Breast epithelium (tissue), 4 donors: ENCODE measurements at regions of chr3 and their contacts with region 1.

Region 1: DNA sequence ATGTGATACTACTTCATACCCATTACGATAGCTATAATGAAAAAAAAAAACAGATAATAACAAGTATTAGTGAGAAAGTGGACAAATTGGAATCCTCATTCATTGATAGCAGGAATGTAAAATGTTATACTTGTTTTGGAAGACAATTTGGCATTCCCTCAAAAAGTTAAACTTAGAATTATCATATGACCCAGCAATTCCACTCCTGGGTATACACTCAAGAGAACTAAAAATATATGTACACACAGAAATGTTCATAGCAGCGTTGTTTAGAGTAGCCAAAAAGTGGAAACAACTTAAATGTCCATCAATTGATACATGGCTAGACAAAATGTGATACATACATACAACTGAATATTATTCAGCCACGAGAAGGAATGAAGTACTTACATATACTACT is 69.9 kb downstream of the PRICKLE2 start:
- DNase-seq: no peak
- H3K4me3 ChIP-seq: no peak overlapping the region
- H3K27ac ChIP-seq: no peak overlapping the region
- H3K4me1 ChIP-seq: peaks cover 4% of the 10 kb centered on the region in 2 donors
- H3K27me3 ChIP-seq: no peaks in the 10 kb centered on the region
- CTCF ChIP-seq: no peak
- POLR2A ChIP-seq: no peak

Region 2: DNA sequence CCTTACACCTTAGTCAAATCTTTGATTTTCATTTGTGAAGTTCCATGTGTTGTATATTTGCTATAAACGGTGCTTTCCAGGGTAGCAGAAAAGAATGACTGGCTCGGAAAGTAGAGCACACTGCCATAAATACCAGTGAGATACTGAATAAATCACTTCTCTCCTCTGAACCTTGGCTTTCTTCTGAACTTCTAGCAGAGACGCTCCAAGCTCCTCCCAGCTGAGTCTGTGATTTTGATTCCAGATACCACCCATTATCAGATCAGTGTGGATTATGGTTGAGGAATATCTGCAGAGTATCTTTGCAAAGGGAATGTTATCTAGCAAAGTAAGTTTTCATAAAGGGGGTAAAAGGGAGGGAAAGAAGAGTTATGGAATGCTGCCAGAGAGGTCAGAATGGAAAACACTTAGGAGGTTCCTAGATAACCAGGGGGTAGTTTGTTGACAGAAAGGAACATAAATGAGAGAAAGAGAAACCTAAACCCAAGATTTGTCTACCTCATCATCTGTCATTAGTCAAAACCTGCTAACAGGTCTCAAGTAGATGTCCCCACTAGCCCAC is 33.5 kb before region 1 on chr3:
- intact Hi-C with region 1: no loop called
- DNase-seq: no peak
- H3K4me3 ChIP-seq: no peak overlapping the region
- H3K27ac ChIP-seq: peak overlapping the region; percentile 2 to 29
- H3K4me1 ChIP-seq: peaks cover 0 to 4% of the 10 kb centered on the region in 2 donors
- H3K27me3 ChIP-seq: no peaks in the 10 kb centered on the region
- CTCF ChIP-seq: no peak
- POLR2A ChIP-seq: no peak

Region 3: DNA sequence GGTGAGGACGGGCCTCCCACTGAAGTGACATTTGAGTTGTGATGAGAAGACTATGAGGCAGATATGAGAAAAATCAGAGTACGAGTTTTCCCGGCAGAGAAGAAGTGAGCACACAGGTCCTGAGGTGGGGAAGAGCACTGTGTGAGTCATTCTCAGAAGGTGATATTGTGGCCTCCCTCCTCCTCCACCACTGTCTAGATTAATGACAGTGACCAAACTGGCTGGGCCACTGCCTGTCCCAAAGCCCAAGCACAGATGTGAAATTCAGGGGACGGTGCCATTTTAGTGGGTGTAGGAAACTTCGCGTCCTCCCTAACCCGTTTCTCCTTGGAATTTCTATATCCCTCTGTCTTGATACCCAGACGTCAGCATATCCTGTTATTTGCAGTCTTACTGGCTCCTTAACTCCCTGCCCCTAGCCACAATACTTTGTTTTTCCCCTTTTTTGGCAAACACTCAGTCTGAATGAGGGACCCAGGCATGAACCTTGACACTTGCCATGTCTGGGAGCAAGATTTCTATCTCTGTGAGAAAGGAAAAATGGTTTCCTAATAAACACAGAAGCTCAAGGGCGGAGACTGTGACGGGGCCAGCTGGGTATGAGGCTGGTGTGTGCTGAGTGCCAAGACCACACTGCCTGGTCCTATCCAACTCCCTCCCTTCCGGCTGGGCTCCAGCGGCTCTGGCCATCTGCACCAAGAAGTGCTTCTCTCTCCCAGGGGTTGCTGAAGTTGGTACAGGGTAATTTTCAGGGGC is 54.7 kb after region 1 on chr3:
- intact Hi-C with region 1: loop called (anchors 2 kb)
- DNase-seq: peak in 1 of 2 donors; percentile 91
- H3K4me3 ChIP-seq: peak overlapping the region in 1 of 3 donors; percentile 27
- H3K27ac ChIP-seq: peak overlapping the region; percentile 89 to 92
- H3K4me1 ChIP-seq: peaks cover 5 to 41% of the 10 kb centered on the region in 2 donors
- H3K27me3 ChIP-seq: no peaks in the 10 kb centered on the region
- CTCF ChIP-seq: no peak
- POLR2A ChIP-seq: no peak